Mammary epithelial cell (primary cell): ENCODE measurements at regions of chr20 and their contacts with region 1.

Region 1: GRCh38 chr20:22567944-22568871 is 16.2 kb downstream of the FOXA2 start:
- DNase-seq: no peak
- H3K4me3 ChIP-seq: no peak overlapping the region
- H3K27ac ChIP-seq: no peak overlapping the region
- H3K4me1 ChIP-seq: no peaks in the 10 kb centered on the region
- H3K27me3 ChIP-seq: peaks cover 71% of the 10 kb centered on the region
- CTCF ChIP-seq: no peak

Region 2: GRCh38 chr20:22366631-22367030 is 201.6 kb before region 1 on chr20:
- CTCF ChIA-PET with region 1: no interaction called
- dilution Hi-C with region 1: no loop called
- in situ Hi-C with region 1: no loop called
- intact Hi-C with region 1: no loop called
- DNase-seq: no peak
- H3K4me3 ChIP-seq: no peak overlapping the region
- H3K27ac ChIP-seq: no peak overlapping the region
- H3K4me1 ChIP-seq: no peaks in the 10 kb centered on the region
- H3K27me3 ChIP-seq: no peaks in the 10 kb centered on the region
- CTCF ChIP-seq: no peak

Region 3: DNA sequence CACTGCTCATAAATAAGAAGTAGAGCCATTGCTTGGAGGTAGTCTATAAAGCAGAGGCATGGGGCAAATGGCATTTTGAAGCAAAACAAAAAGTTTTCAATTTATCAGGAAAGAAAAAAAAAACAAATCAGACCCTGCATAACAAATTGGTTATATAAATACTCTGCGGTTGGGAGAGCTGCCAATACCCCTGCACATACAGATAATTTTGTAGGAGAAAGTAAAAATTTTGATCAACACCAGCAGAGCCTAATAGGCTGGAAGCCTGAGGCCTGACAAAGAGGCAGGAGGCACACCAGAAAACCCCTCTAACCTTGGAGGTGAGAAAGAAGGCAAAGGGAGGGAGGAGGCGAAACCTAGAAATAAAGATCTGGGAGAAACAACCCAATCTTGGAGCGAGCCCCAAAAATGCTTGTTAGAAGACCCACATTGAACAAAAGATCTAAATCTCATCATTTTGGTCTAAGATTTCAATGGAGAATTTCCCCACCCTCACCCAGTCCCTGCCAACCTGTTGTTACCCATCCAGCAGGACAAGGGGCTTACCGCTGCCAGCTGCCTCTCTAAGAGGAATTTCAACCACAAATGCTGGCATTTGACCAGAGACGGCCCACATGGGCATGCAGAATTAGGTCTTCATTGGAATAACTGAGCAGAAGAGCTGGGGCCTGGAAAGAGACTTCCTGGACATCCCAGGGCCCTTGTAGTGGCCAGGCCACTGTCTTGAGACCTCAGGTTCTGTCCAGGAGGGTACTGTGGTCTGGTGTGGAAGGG is 12.2 kb before region 1 on chr20:
- CTCF ChIA-PET with region 1: no interaction called
- dilution Hi-C with region 1: no loop called
- in situ Hi-C with region 1: no loop called
- intact Hi-C with region 1: loop called (anchors 1 kb)
- DNase-seq: no peak
- H3K4me3 ChIP-seq: no peak overlapping the region
- H3K27ac ChIP-seq: no peak overlapping the region
- H3K4me1 ChIP-seq: no peaks in the 10 kb centered on the region
- H3K27me3 ChIP-seq: peaks cover 27% of the 10 kb centered on the region
- CTCF ChIP-seq: no peak